A549 (cell line): ENCODE measurements at regions of chr2 and their contacts with region 1.

Region 1: GRCh38 chr2:180125245-180125962 is 118.3 kb upstream of the CWC22 start:
- DNase-seq: peak; percentile 35 to 87
- ATAC-seq: peak; percentile 92 to 96
- H3K4me3 ChIP-seq: peak overlapping the region; percentile 19; the same call in 1 of the 3 replicates
- H3K27ac ChIP-seq: peak overlapping the region; percentile 30 to 42; a peak in 4 of 6 replicates
- H3K4me1 ChIP-seq: peaks cover 19% of the 10 kb centered on the region
- CTCF ChIP-seq: peak; percentile 84
- EP300 ChIP-seq: no peak
- POLR2A ChIP-seq: no peak
- RAD21 ChIP-seq: peak; percentile 85 to 86

Region 2: DNA sequence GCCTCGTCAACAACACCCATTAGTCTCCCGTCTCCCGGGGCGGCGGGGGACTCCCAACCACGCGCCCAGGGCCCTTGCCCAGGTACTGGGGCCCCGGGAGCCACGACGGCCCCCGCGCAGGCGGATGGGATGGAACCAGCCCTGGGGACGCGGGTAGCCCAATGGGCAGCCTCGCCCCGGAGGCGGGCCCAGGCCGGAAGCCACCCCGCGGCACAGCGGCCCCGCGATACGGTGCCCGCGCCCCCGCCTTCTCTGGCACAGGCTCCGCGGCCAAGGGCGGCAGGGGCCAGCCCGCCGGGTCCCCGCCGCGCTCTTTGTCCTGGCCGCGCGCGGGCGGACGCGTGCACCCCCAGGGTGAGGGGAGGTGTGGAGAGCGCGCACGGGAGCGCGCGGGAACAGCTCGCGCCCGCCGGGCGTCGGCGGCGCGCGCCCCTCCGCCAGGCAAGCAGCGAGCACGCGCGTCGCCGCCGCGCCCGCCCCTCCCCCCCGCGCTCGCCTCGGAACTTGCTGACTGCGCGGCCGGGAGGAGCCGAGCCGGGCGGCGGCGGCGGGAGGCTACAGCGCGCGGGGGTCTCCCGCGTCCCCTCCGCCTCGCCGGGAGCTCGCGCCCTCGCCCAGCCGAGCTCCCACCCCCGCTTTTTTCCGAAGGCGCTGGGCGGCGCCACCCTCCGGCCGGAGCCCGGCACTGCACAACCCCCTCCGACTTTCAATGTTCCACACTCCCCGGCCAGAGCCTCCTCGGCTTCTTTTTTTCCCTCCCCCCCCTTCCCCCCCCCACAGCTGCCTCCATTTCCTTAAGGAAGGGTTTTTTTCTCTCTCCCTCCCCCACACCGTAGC is 854.9 kb after region 1 on chr2 and contains the start of gene UBE2E3:
- CTCF ChIA-PET with region 1: interaction called, 14 read pairs
- POLR2A ChIA-PET with region 1: interaction called, 6 read pairs
- DNase-seq: peak; percentile 63 to 77
- ATAC-seq: peak; percentile 92 to 95
- H3K4me3 ChIP-seq: peak within 1 kb of the TSS; percentile 91
- H3K27ac ChIP-seq: peak within 1 kb of the TSS; percentile 93 to 94
- H3K4me1 ChIP-seq: peaks cover 30% of the 10 kb centered on the region
- CTCF ChIP-seq: peak; percentile 75
- EP300 ChIP-seq: no peak
- POLR2A ChIP-seq: peak; percentile 42
- RAD21 ChIP-seq: peak; percentile 41 to 62
- polyA plus RNA-seq, gene UBE2E3: 70.6 and 104 TPM in 2 replicates

Region 3: DNA sequence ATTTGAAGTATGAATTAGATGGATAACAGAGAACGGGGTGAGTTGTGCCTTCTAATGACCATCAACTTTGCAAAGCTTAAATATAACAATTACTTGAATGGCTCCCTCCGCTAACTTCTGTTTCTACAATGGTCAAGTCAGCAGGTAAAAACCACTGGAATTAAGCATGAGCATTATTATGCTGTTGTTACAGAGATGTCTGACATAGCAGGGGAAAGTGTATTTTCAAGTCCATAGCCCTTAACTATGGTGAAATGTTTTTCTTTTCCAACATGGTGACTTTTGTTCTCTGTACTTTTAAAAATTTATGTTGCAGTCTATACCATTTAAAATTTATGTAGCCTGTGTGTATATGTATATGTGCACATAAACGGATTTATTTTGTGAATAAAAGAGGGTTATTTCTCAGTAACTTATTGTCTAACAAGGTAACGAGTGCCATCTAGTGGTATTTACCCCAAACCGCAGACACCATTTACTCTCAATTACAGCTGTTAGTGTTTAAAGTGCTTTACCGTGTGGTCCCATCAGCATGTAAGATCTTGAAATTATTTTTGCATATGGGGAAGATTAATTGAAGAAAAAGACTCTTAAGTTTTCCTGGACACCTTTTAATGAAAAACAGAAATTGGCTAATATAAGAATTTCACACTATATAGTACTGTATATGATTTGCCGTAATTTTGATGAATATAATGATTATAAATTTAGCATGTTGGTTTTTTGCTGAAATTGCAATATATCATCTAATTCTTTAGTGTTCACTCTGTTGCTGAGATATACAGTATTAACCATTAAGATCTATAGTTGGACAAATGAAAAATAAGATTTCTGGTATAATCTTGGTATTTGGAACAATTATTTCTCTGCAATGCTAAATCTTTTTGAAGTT is 933.2 kb after region 1 on chr2:
- CTCF ChIA-PET with region 1: interaction called, 27 read pairs
- POLR2A ChIA-PET with region 1: no interaction called
- DNase-seq: peak in 1 of 2 experiments; percentile 49
- ATAC-seq: peak in 1 of 2 experiments; percentile 54; a peak in 3 of 6 replicates
- H3K4me3 ChIP-seq: no peak overlapping the region
- H3K27ac ChIP-seq: no peak overlapping the region
- H3K4me1 ChIP-seq: no peaks in the 10 kb centered on the region
- CTCF ChIP-seq: peak; percentile 84
- EP300 ChIP-seq: no peak
- POLR2A ChIP-seq: no peak
- RAD21 ChIP-seq: peak; percentile 82

Region 4: DNA sequence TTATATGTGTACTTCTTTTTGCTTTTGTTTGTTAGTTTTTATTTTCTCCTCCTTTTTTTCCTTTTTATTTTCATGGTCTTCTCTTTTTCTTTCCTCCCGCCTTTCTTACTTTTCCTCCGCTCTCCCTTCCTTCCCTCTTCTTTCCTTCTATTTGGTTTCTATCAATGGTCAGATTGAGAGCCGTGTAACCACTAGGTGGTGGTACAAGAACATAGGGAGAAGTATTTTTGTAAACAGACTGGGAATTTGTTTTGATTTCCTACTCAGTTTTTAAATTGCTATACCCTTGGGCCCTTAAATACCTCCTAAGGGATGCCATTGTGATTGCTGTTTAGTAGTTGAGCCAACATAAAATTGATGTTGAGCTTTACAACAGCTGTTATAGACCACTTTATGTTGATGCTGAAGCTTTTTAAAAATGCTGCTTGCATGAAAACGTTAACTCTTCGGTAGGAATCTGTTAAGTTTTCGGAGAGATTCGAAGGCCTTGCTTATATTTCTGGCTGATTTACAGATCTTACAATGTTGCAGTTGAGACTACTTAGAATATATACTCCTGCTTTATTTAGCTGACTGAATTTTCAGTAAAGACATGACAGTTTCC is 979.2 kb after region 1 on chr2:
- CTCF ChIA-PET with region 1: interaction called, 16 read pairs
- POLR2A ChIA-PET with region 1: no interaction called
- DNase-seq: peak; percentile 9 to 58
- ATAC-seq: peak; percentile 36 to 74; a peak in 5 of 6 replicates
- H3K4me3 ChIP-seq: no peak overlapping the region
- H3K27ac ChIP-seq: no peak overlapping the region
- H3K4me1 ChIP-seq: peaks cover 25% of the 10 kb centered on the region
- CTCF ChIP-seq: peak; percentile 84
- EP300 ChIP-seq: no peak
- POLR2A ChIP-seq: no peak
- RAD21 ChIP-seq: peak; percentile 85 to 87

Region 5: GRCh38 chr2:181457121-181457740 is 1331.8 kb after region 1 on chr2 and contains the start of gene ITGA4:
- CTCF ChIA-PET with region 1: interaction called, 11 read pairs
- POLR2A ChIA-PET with region 1: no interaction called
- DNase-seq: peak; percentile 36 to 52
- ATAC-seq: peak; percentile 98 to 100
- H3K4me3 ChIP-seq: peak within 1 kb of the TSS; percentile 57
- H3K27ac ChIP-seq: peak within 1 kb of the TSS; percentile 54 to 81; a peak in 5 of 6 replicates
- H3K4me1 ChIP-seq: no peaks in the 10 kb centered on the region
- CTCF ChIP-seq: peak; percentile 64
- EP300 ChIP-seq: no peak
- POLR2A ChIP-seq: no peak
- RAD21 ChIP-seq: peak; percentile 58 to 78
- polyA plus RNA-seq, gene ITGA4: 1.4 and 1.7 TPM in 2 replicates

Region 6: DNA sequence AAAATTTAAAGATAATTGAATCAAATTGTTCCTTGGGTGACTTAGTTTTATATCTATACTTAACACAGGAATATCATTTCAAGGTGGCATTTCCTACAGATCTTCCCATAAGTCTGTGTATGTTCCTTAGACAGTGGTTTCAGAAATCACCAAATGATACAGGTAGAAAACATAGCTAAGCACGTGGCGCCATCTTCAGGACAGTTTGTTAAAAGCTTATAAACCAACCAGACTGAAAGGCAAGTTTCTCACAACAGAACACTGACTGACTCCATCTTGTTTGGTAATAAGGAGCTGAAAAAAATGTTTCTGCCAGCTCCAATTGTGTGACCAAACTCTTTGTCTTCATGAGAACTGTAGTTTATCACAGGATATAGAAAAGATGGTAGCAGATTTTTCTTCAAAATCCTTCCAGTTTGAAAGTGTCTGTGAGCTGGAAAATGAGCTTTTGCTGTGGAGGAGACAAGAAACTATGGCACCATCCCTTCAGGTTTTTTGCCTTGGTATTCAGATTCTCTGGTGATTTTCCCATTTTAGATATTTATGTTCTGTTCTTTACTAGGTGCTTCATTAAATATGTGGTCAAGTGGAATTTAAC is 1589.7 kb after region 1 on chr2:
- CTCF ChIA-PET with region 1: interaction called, 13 read pairs
- POLR2A ChIA-PET with region 1: no interaction called
- DNase-seq: peak; percentile 16 to 78
- ATAC-seq: peak; percentile 76 to 90; a peak in 5 of 6 replicates
- H3K4me3 ChIP-seq: no peak overlapping the region
- H3K27ac ChIP-seq: no peak overlapping the region
- H3K4me1 ChIP-seq: no peaks in the 10 kb centered on the region
- CTCF ChIP-seq: peak; percentile 87
- EP300 ChIP-seq: no peak
- POLR2A ChIP-seq: no peak
- RAD21 ChIP-seq: peak; percentile 90 to 94